GM13976 (cell line): ENCODE measurements at regions of chr4 and their contacts with region 1.

Region 1: DNA sequence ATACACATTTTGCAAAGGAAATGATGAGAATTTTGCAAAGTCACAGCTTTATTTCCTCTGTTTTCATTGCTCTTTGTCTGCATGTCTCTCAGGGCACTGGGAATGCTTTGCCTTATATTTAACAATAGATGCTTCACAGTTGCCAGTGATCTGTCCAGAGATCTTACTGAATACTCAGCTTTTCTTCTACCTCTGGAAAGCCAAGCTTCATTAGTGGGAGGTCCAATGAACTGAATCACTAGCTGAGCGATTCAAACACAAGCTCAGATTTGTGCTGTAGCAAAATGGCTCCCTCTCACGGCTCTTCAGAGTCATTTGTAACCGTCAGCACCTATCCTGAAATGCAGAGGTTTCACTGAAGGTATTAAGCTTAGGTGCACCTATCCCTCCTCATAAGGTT is 138.9 kb downstream of the DCLK2 start:
- DNase-seq: no peak
- CTCF ChIP-seq: no peak

Region 2: DNA sequence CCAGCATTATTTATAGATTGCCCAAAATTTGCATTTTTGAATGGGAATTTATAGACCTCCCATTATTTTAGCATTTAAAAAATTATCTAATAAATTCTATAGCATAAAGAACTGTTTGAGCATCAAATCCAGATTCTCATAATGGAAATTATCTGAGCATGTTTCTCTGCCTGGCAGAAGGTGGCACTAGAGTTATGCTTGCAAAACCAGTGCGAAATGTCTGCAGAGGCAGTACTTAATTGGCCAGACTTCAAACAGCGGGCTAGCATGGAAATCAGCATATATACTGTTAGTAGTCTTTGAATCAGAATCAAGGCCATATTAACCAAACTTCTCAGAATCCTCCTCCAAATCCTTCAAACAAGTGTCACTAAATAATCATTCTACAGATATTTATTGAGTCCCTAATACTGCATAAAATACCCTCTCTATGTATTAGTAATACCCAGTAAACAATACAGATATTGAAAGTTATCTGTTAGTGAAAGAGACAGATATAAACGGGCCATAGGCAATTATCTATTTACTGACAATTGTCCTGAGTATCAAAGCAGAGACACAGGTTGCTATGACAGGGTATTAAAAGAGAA is 217.6 kb before region 1 on chr4:
- in situ Hi-C with region 1: loop called (anchors 10 kb)
- DNase-seq: peak; percentile 12
- CTCF ChIP-seq: peak; percentile 54

Region 3: GRCh38 chr4:150126201-150126863 is 90.9 kb before region 1 on chr4:
- in situ Hi-C with region 1: no loop called
- DNase-seq: peak; percentile 34
- CTCF ChIP-seq: no peak